Activated CD4-positive, alpha-beta T cell treated with anti-CD3 and anti-CD28 coated beads for 36 hours (primary cell): ENCODE measurements at regions of chr16 and their contacts with region 1.

Region 1: DNA sequence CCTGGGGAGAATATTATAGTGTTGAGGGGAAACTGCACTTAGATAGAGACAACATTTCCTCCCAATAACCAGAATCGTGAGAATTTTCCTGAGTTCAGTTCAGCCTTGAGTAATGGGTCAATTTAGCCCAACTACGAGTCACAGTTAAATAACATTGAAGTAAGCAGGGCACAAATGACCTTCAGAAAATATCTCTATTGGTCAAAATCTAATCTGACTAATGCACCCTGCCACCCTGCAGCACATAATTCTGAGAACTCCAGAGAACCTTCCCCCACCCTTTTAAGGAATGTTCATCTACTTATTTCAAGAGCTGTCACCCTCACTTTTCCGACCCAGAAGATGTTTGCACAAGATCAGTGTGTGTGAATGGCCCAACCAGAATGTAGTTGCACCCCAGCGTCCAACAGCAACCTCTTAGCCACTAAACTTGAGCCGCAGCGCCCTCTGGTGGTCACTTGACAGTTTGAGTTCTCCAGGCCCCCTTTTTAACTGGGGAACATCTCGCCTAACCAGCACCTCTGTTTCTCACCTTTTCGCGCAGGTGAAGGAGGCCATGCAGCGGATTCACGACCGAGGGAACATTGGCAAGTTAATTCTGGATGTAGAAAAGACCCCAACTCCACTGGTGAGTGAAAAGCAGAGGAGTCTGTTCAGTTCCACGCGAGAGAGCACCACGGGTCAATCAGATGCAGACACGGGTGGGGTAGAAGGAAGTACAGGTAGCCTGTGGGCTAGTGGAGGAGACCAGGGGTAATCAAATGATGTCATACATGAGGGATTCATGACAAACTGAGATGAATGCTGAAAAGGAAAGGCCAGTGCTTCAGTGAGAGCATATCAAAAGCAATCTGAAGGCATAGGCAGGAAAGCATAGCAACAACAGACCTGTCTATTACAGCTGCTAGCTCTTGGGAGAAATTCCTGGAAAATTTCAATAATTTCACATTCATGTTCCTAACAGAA is 50.8 kb upstream of the CLEC3A start:
- DNase-seq: peak; percentile 89
- ATAC-seq: peak; percentile 70
- H3K4me3 Mint-ChIP-seq: no peak overlapping the region
- H3K27ac Mint-ChIP-seq: no peak overlapping the region
- H3K4me1 Mint-ChIP-seq: no peaks in the 10 kb centered on the region
- H3K27me3 Mint-ChIP-seq: peaks cover 4% of the 10 kb centered on the region

Region 2: DNA sequence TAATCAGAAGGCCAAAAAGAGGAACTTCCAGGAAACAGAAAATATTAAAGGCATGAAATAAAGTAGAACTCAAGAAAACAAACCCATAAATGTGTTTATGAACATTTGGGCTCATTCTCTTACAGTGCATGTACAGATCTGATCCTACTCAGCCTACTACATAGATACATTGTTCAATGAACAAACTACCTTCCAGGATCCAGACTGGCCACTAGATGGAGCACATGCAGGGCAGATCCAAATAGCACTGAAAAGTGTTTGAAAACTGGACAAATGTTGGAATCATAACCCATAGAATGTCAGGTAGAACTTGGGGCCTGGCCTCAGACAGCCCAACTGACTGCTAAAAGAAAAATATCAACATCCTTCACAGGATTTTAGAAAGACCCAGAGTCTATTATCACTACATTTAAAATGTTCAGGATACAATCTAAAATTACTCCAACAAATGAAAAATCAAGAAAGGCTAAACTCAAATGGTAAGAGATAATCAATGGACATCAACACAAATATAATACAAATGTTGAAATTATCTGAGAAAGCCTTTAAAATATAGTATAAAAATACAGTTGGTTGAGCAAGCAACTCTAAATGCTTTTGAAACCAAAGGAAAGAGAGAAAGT is 371.7 kb before region 1 on chr16:
- CTCF ChIA-PET with region 1: interaction called, 5 read pairs
- POLR2A ChIA-PET with region 1: no interaction called
- intact Hi-C with region 1: loop called in 1 of 2 experiments (anchors 1 kb)
- DNase-seq: peak; percentile 50
- ATAC-seq: no peak
- H3K4me3 Mint-ChIP-seq: no peak overlapping the region
- H3K27ac Mint-ChIP-seq: no peak overlapping the region
- H3K4me1 Mint-ChIP-seq: no peaks in the 10 kb centered on the region
- H3K27me3 Mint-ChIP-seq: peaks cover 12% of the 10 kb centered on the region

Region 3: DNA sequence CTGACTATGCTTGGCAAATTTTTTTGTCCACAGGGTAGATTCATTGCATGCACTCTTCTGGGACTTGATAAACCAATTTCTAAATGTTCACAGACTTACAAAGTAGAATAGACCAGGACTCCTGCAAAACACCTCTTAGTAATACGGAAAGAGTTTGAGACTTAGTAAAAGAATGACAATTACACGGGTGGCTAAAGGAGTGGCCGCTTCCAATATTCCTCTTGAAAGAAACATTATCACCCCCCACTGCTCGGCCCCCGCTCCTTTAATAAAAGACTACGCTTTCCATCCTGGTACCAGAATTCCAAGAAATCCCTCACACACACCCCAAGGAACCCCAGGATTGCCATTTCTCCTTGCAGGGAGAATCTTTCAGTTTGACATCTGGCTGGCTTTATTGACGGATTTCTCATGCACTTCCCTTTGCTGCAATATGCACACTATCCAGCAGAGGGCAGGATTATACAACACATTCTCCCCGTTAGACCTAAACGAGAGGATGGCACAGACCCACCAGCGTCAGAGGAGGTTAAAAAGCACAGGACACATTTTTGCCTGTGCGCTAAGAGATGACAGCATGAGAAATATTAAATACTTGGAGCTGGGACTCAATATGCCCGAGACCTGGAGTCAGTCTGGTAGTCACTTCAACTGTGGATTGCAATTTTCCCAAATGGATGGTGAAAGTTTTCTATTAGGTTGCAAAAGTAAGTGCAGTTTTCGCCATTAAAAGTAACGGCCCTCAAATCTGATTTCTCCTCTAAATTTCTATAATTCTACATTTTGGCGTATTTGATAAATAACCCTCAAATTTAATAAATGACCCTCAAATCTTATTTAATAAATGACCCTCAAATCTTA is 295.9 kb before region 1 on chr16:
- CTCF ChIA-PET with region 1: interaction called, 14 read pairs
- POLR2A ChIA-PET with region 1: no interaction called
- intact Hi-C with region 1: loop called (anchors 1 kb)
- DNase-seq: peak; percentile 77
- ATAC-seq: peak; percentile 55
- H3K4me3 Mint-ChIP-seq: no peak overlapping the region
- H3K27ac Mint-ChIP-seq: no peak overlapping the region
- H3K4me1 Mint-ChIP-seq: no peaks in the 10 kb centered on the region
- H3K27me3 Mint-ChIP-seq: peaks cover 11% of the 10 kb centered on the region

Region 4: DNA sequence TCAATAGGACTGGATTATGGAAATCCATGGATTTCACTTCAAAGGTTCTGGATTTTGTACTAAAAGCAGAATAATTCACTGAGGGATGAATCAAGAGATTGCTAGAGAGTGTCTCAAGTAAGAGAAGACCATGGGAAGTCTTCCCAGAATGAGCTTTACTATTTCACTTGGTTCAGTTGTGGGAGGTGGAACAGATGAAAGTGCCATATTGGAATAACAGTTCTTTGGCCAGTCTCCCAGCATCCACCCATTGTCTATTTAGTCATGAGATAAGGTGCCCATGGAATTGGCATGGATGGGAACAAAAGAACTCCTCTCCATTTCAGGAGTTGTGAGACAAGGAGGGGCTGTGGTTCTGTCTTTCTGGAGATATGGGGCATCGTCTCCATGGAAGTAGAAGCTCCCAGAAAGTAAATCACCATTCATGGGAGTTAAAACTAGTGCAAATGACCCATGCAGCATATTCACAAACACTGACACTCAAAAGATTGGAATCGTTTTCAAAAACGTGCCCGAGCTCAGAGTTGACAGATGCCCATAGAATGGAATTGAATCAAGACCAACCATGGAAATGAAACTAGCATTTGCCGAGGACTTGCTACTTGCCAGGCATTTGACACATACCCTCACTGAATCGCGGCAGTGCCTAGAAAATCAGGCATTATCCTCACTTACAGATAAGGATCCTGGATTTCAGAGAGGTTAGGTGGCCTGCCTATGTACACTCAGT is 14.6 kb after region 1 on chr16:
- CTCF ChIA-PET with region 1: no interaction called
- POLR2A ChIA-PET with region 1: no interaction called
- intact Hi-C with region 1: no loop called
- DNase-seq: no peak
- ATAC-seq: no peak
- H3K4me3 Mint-ChIP-seq: no peak overlapping the region
- H3K27ac Mint-ChIP-seq: no peak overlapping the region
- H3K4me1 Mint-ChIP-seq: no peaks in the 10 kb centered on the region
- H3K27me3 Mint-ChIP-seq: peaks cover 10% of the 10 kb centered on the region

Region 5: GRCh38 chr16:78002915-78003538 is 31.4 kb after region 1 on chr16:
- CTCF ChIA-PET with region 1: interaction called, 9 read pairs
- POLR2A ChIA-PET with region 1: no interaction called
- intact Hi-C with region 1: loop called in 1 of 2 experiments (anchors 1 kb)
- DNase-seq: peak; percentile 90
- ATAC-seq: peak; percentile 99
- H3K4me3 Mint-ChIP-seq: no peak overlapping the region
- H3K27ac Mint-ChIP-seq: no peak overlapping the region
- H3K4me1 Mint-ChIP-seq: no peaks in the 10 kb centered on the region
- H3K27me3 Mint-ChIP-seq: peaks cover 16% of the 10 kb centered on the region